ENCODE measurements at regions of chr17 and their contacts with region 1.

Region 1: GRCh38 chr17:44210342-44211192 is 8.9 kb downstream of the UBTF start:
- DNase-seq: peak; percentile 89
- H3K4me3 ChIP-seq: peak overlapping the region; percentile 26
- H3K27ac ChIP-seq: peak overlapping the region; percentile 54
- H3K4me1 ChIP-seq: peaks cover 22% of the 10 kb centered on the region
- H3K27me3 ChIP-seq: no peaks in the 10 kb centered on the region
- CTCF ChIP-seq: peak; percentile 99

Region 2: DNA sequence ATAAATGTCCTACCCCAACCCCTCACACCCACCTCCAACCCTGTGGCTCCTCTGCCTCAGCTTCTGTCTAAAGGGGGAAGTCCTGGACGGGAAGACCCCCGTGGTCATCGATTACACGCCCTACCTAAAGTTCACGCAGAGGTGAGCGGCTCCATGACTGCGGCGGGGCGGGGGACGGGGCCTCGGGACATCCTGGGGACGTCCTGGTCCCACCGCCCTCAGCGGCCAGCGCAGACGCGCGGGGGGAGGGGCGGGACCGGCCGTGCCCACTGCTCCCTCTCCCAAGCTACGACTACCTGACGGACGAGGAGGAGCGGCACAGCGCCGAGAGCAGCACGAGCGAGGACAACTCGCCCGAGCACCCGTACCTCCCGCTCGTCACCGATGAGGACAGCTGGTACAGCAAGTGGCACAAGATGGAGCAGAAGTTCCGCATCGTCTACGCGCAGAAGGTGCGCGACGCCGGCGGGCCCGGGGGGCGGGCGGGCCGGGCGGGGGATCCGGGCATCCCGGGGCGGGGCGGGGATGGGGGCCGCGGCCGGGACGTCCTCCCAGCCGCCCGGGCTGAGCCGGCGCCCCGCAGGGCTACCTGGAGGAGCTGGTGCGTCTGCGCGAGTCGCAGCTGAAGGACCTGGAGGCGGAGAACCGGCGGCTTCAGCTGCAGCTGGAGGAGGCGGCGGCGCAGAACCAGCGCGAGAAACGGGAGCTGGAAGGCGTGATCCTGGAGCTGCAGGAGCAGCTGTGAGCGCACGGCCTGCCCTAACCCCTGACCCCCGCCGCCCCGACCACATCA is 104.5 kb after region 1 on chr17:
- intact Hi-C with region 1: no loop called
- DNase-seq: no peak
- H3K4me3 ChIP-seq: peak overlapping the region; percentile 51
- H3K27ac ChIP-seq: no peak overlapping the region
- H3K4me1 ChIP-seq: peaks cover 9% of the 10 kb centered on the region
- H3K27me3 ChIP-seq: peaks cover 78% of the 10 kb centered on the region
- CTCF ChIP-seq: no peak

Region 3: GRCh38 chr17:44331249-44331760 is 120.7 kb after region 1 on chr17:
- intact Hi-C with region 1: loop called (anchors 5 kb)
- DNase-seq: no peak
- H3K4me3 ChIP-seq: no peak overlapping the region
- H3K27ac ChIP-seq: peak overlapping the region; percentile 47
- H3K4me1 ChIP-seq: peaks cover 18% of the 10 kb centered on the region
- H3K27me3 ChIP-seq: peaks cover 1% of the 10 kb centered on the region
- CTCF ChIP-seq: peak; percentile 85

Measured in left ventricle myocardium inferior (tissue), 1 donor.